Naive thymus-derived CD4-positive, alpha-beta T cell (primary cell): ENCODE measurements at regions of chr6 and their contacts with region 1.

Region 1: GRCh38 chr6:41072676-41073623 is at the start of gene NFYA:
- DNase-seq: peak; percentile 99 to 100 (median 100)
- ATAC-seq: peak; percentile 80
- H3K4me3 ChIP-seq: peak within 1 kb of the TSS; percentile 78
- H3K4me3 Mint-ChIP-seq: peak within 1 kb of the TSS; percentile 90 to 98 (median 96)
- H3K27ac ChIP-seq: peak within 1 kb of the TSS; percentile 95
- H3K27ac Mint-ChIP-seq: peak within 1 kb of the TSS; percentile 95 to 99 (median 97)
- H3K4me1 ChIP-seq: peaks cover 30% of the 10 kb centered on the region in 2 donors
- H3K4me1 Mint-ChIP-seq: peaks cover 39 to 66% (median 59%) of the 10 kb centered on the region in 7 donors
- H3K27me3 ChIP-seq: no peaks in the 10 kb centered on the region
- H3K27me3 Mint-ChIP-seq: peaks cover 0 to 5% (median 0%) of the 10 kb centered on the region in 5 donors
- total RNA-seq, gene NFYA: 31.6 to 63.3 (median 35.9) TPM

Region 2: GRCh38 chr6:39228992-39229767 is 1843.8 kb before region 1 on chr6 and contains the start of gene KCNK5:
- CTCF ChIA-PET with region 1: no interaction called
- POLR2A ChIA-PET with region 1: no interaction called
- intact Hi-C with region 1: loop called in 1 of 2 experiments (anchors 10 kb)
- DNase-seq: peak; percentile 5 to 91 (median 42)
- ATAC-seq: peak; percentile 88
- H3K4me3 ChIP-seq: peak within 1 kb of the TSS; percentile 54
- H3K4me3 Mint-ChIP-seq: peak within 1 kb of the TSS; percentile 61 to 86 (median 72)
- H3K27ac ChIP-seq: no peak within 1 kb of the TSS
- H3K27ac Mint-ChIP-seq: peak within 1 kb of the TSS in 2 of 9 donors; percentile 51 to 91
- H3K4me1 ChIP-seq: peaks cover 18 to 43% of the 10 kb centered on the region in 2 donors
- H3K4me1 Mint-ChIP-seq: peaks cover 15 to 48% (median 33%) of the 10 kb centered on the region in 7 donors
- H3K27me3 ChIP-seq: no peaks in the 10 kb centered on the region
- H3K27me3 Mint-ChIP-seq: peaks cover 0 to 12% (median 6%) of the 10 kb centered on the region in 5 donors
- total RNA-seq, gene KCNK5: 0.24 to 9.6 (median 0.34) TPM in 3 of 5 experiments, not detected in the others

Region 3: DNA sequence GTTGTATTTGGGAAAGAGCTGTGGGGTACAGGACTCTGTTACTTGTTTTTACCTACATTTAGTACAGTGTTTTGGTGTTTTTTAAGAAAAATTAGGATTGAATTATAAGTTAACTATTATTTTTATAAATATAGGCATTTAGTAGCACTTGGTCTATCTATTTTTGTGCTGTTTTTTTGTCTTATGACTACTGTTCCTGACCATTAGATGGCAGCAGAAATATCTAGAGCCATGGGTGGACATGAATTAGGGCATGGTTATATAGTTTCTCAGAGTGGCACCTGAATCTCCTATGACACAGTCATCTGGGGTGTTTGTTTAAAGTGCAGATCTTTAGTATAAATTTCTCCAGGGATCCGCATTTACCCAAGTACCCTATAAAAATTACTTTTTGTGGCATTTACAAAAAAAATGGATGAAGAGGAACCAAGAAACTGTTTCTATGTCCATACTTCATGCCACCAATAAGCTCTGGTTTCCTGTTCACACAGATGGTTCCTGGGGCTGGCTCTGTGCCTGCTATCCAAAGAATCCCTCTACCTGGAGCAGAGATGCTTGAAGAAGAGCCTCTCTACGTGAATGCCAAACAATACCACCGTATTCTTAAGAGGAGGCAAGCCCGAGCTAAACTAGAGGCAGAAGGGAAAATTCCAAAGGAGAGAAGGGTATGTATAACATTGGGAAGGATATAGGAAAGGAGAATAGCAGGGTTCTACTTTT is 19.6 kb after region 1 on chr6:
- CTCF ChIA-PET with region 1: no interaction called
- POLR2A ChIA-PET with region 1: no interaction called
- intact Hi-C with region 1: no loop called
- DNase-seq: no peak
- ATAC-seq: no peak
- H3K4me3 ChIP-seq: no peak overlapping the region
- H3K4me3 Mint-ChIP-seq: no peak overlapping the region
- H3K27ac ChIP-seq: no peak overlapping the region
- H3K27ac Mint-ChIP-seq: peak overlapping the region in 2 of 9 donors; percentile 54 to 62
- H3K4me1 ChIP-seq: no peaks in the 10 kb centered on the region
- H3K4me1 Mint-ChIP-seq: peaks cover 0 to 14% (median 5%) of the 10 kb centered on the region in 7 donors
- H3K27me3 ChIP-seq: no peaks in the 10 kb centered on the region
- H3K27me3 Mint-ChIP-seq: no peaks in the 10 kb centered on the region

Region 4: DNA sequence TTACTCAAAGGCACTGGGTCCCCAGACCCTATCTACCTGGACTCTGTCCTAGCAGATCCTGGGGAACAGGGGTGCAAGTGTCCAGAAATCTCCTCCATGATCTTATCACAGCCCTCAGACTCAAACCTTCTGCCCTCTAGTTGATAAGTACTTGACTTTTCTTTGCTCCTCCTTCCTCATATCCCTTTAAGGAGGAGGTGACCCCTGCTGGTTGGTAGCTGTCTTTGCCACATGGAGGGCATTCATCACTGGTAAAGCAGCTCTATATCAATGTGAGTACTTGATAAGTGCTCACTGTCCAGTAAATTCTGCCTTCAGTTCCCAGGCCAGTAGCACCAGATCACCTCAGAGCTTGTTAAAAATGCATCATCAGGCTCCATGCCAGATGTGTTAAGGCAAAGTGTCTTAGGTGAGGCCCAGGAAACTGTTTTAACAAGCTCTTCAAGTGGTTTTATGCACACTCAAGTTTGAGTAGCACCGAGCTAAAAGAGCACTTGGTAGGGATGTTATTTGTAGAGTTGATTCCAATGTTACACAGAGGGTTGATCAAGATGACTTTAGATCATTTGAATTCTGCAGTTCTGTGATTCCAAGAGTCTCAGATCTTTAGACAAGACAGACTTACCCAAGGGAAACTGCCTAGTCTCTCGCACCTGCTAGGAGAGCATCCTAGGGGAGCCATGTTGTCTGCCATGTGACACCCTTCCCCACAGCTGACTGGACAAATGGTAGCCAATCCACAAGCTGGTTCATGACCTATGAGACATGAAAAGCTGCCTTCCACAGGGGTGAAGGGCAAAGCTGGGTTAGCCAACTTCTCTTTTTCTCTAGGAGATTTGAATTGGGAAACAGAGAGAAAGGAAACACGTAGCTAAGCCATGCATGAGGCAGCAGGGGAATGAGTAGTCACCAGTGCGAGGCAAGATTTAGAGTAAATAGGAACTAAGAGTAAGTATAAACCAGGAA is 109.4 kb after region 1 on chr6:
- CTCF ChIA-PET with region 1: interaction called, 3 read pairs
- POLR2A ChIA-PET with region 1: interaction called, 5 read pairs
- intact Hi-C with region 1: loop called (anchors 1 kb)
- DNase-seq: peak in 8 of 9 donors; percentile 34 to 68 (median 60)
- ATAC-seq: peak; percentile 85
- H3K4me3 ChIP-seq: no peak overlapping the region
- H3K4me3 Mint-ChIP-seq: no peak overlapping the region
- H3K27ac ChIP-seq: no peak overlapping the region
- H3K27ac Mint-ChIP-seq: peak overlapping the region in 5 of 9 donors; percentile 0 to 68 (median 5)
- H3K4me1 ChIP-seq: peaks cover 0 to 17% of the 10 kb centered on the region in 2 donors
- H3K4me1 Mint-ChIP-seq: peaks cover 20 to 43% (median 34%) of the 10 kb centered on the region in 7 donors
- H3K27me3 ChIP-seq: no peaks in the 10 kb centered on the region
- H3K27me3 Mint-ChIP-seq: peaks cover 0 to 10% (median 3%) of the 10 kb centered on the region in 5 donors

Region 5: DNA sequence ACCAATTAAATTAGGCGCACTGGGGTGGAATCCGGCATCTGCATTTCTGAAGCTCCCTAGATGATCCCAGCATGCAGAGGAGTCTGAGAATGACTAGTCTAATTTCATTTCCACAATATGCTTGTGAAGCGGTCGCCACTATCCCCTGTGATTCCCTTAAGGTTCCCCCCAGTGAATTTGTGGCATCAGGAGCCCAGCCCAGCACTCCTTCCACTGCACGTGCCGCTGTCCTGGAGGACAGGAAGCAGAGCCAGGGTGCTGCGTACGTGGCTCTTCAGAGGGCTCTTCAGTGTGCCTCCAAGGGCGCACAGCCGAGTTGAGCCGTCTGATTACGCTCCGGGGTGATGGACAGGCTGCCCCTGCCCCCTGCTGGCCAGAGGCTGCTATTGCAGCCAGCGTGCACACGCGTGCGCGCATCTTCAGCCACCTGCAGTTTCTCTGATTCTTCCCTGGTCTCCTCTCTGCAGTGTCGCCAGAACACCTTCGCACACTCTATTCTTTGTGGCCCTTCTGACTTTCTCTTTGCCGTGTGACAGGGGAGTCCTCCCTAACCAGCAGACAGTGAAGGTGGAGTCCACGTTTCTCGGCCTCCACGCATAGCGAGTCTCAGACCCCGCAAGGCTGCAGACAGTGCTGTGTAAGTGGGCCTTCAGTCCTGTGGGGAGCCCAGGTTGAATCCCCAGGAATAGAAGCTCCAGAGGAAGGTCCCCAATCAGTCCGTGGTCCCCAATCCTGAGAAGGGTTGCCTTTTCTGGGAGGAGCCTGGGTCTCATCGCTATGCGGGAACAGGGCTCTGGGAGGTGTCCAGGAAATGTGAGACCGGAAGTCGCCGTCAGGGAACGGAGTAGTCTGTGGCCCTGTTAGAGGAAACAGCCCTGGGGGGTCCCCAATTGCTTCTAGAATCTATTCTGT is 246.0 kb after region 1 on chr6:
- CTCF ChIA-PET with region 1: no interaction called
- POLR2A ChIA-PET with region 1: interaction called, 6 read pairs
- intact Hi-C with region 1: loop called (anchors 1 kb)
- DNase-seq: peak; percentile 69 to 88 (median 83)
- ATAC-seq: peak; percentile 100
- H3K4me3 ChIP-seq: peak overlapping the region; percentile 6
- H3K4me3 Mint-ChIP-seq: peak overlapping the region; percentile 55 to 80 (median 74)
- H3K27ac ChIP-seq: no peak overlapping the region
- H3K27ac Mint-ChIP-seq: peak overlapping the region in 7 of 9 donors; percentile 39 to 79 (median 70)
- H3K4me1 ChIP-seq: peaks cover 3 to 9% of the 10 kb centered on the region in 2 donors
- H3K4me1 Mint-ChIP-seq: peaks cover 0 to 24% (median 15%) of the 10 kb centered on the region in 7 donors
- H3K27me3 ChIP-seq: peaks cover 0 to 3% of the 10 kb centered on the region in 2 donors
- H3K27me3 Mint-ChIP-seq: peaks cover 0 to 48% (median 10%) of the 10 kb centered on the region in 5 donors

Region 6: DNA sequence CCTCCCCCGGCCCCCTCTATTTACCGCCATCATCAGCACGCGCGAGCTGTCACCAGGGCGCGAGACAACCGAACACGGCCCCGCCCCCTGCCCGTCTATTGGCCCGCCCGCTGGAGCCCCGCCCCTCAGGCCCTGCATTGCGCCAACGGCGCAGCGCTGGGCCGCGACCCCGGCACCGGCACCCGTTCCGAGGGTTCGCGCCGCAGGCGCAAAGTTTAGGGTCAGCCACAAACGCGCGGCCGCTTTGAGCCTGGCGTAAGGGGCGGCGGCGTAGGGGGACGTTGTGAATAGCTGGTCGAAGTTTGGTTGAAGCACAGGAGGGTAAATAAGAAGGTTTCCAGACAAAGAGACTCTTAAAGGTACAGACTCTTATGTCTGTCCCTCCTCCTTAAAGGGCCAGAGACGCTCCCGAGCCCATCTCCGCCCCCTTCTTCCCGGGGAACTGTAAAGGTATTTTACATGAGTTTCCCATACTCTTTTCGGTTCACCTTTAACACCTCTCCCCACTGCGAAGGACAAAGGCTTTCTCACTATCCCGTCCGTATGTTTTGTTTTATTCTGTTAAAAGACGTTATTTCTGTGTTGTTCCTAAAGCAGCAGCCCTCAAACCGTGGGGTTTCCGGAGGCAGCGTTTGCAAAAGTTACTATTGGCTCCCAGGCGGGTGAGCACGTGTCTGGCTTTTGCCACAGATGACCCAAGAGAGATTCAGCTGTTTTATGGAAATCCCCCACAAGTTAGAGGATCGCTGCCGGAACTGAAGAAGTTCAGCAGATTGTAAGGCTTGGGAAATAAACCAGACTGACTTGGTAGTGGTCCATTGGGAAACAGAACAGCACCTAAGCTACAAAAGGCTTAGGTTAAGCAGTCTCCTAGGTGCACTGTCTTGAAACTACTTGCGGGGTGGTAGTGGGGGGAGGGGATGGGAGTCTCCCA is 822.6 kb after region 1 on chr6 and contains the start of gene USP49:
- CTCF ChIA-PET with region 1: no interaction called
- POLR2A ChIA-PET with region 1: no interaction called
- intact Hi-C with region 1: loop called in 1 of 2 experiments (anchors 2 kb)
- DNase-seq: peak; percentile 83 to 92 (median 90)
- ATAC-seq: peak; percentile 97
- H3K4me3 ChIP-seq: peak within 1 kb of the TSS; percentile 69
- H3K4me3 Mint-ChIP-seq: peak within 1 kb of the TSS in 1 of 10 donors; percentile 94
- H3K27ac ChIP-seq: peak within 1 kb of the TSS; percentile 76
- H3K27ac Mint-ChIP-seq: peak within 1 kb of the TSS in 7 of 9 donors; percentile 78 to 97 (median 93)
- H3K4me1 ChIP-seq: peaks cover 14 to 26% of the 10 kb centered on the region in 2 donors
- H3K4me1 Mint-ChIP-seq: peaks cover 5 to 17% (median 11%) of the 10 kb centered on the region in 7 donors
- H3K27me3 ChIP-seq: no peaks in the 10 kb centered on the region
- H3K27me3 Mint-ChIP-seq: peaks cover 0 to 7% (median 0%) of the 10 kb centered on the region in 5 donors
- total RNA-seq, gene USP49: 1.8 to 6.0 (median 3.1) TPM